ENCODE measurements at regions of chr5 and their contacts with region 1.

Region 1: GRCh38 chr5:35182541-35183535 is 47.4 kb downstream of the PRLR start:
- DNase-seq: peak in 2 of 3 donors; percentile 46 to 61
- ATAC-seq: peak; percentile 88 to 94 (median 90)
- H3K4me3 ChIP-seq: no peak overlapping the region
- H3K27ac ChIP-seq: no peak overlapping the region
- H3K4me1 ChIP-seq: peaks cover 0 to 13% (median 2%) of the 10 kb centered on the region in 4 donors
- H3K27me3 ChIP-seq: no peaks in the 10 kb centered on the region
- CTCF ChIP-seq: peak; percentile 57 to 78 (median 72)
- POLR2A ChIP-seq: no peak

Region 2: GRCh38 chr5:35089334-35090314 is 93.2 kb before region 1 on chr5:
- intact Hi-C with region 1: loop called (anchors 10 kb)
- DNase-seq: peak in 1 of 3 donors; percentile 70
- ATAC-seq: peak; percentile 80 to 88 (median 85)
- H3K4me3 ChIP-seq: no peak overlapping the region
- H3K27ac ChIP-seq: no peak overlapping the region
- H3K4me1 ChIP-seq: peaks cover 0 to 12% (median 3%) of the 10 kb centered on the region in 4 donors
- H3K27me3 ChIP-seq: no peaks in the 10 kb centered on the region
- CTCF ChIP-seq: peak; percentile 79 to 88 (median 83)
- POLR2A ChIP-seq: no peak

Region 3: GRCh38 chr5:35129918-35130485 is 52.8 kb before region 1 on chr5:
- intact Hi-C with region 1: no loop called
- DNase-seq: peak; percentile 34 to 75 (median 75)
- ATAC-seq: peak; percentile 74 to 87 (median 84)
- H3K4me3 ChIP-seq: no peak overlapping the region
- H3K27ac ChIP-seq: peak overlapping the region in 2 of 3 donors; percentile 7 to 17
- H3K4me1 ChIP-seq: peaks cover 0 to 40% (median 7%) of the 10 kb centered on the region in 4 donors
- H3K27me3 ChIP-seq: no peaks in the 10 kb centered on the region
- CTCF ChIP-seq: no peak
- POLR2A ChIP-seq: no peak

Measured in right lobe of liver (tissue), 6 donors.